Posterior vena cava (tissue), 2 donors: ENCODE measurements at regions of chr10 and their contacts with region 1.

Region 1: GRCh38 chr10:74262856-74263255 is 111.8 kb downstream of the ADK start:
- DNase-seq: no peak

Region 2: GRCh38 chr10:74826142-74827044 is 563.5 kb after region 1 on chr10 and contains the start of gene KAT6B:
- intact Hi-C with region 1: loop called in 1 of 2 experiments (anchors 10 kb)
- DNase-seq: peak; percentile 100
- total RNA-seq, gene KAT6B: 34.7 to 35.0 TPM

Region 3: DNA sequence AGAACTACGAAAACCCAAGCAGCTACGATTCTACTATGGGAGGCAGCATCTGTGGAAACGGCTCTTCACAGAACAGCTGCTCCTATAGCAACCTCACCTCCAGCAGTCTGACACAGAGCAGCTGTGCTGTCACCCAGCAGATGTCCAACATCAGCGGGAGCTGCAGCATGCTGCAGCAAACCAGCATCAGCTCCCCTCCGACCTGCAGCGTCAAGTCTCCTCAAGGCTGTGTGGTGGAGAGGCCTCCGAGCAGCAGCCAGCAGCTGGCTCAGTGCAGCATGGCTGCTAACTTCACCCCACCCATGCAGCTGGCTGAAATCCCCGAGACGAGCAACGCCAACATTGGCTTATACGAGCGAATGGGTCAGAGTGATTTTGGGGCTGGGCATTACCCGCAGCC is 767.0 kb after region 1 on chr10:
- intact Hi-C with region 1: loop called in 1 of 2 experiments (anchors 10 kb)
- DNase-seq: no peak

Region 4: DNA sequence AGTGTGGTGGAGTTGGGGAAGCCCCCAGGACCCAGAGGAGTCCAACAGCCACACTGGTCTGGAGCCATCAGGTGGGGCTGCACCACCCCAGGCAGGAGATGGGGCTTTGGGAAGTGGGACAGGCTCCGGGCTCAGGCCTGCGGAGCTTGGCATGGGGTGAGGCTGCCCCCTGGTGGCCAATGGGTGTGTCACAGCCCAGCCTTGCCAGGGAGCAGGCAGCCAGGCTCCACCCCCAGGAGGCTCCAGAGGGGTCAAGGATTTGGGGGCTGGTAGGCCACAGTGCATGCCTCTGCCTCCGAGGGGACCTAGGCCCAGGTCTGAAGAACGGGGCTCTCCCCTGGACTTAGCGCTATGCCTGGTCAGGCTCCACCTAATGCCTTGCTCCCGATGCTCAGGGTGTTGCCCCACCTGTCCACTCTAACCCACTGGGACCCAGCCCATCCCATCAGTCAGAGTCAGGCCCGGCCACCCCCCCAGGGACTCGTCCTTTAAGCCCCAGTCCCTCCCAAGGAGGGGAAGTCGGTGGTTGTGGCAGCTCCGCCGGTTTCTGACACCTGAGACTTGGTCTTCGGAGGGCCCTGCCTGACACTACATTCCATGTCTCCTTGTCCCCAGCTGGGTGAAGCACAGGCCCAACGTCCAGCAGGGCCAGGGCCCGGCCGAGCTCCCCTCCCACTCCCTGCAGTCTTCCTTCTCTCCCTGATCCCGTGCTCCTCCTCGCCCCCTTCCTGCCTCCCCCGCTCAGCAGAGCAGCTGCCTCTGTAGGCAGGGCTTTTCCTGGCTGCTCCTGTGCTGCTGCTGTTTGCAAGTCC is 837.3 kb after region 1 on chr10:
- intact Hi-C with region 1: loop called in 1 of 2 experiments (anchors 5 kb)
- DNase-seq: peak; percentile 93

Region 5: DNA sequence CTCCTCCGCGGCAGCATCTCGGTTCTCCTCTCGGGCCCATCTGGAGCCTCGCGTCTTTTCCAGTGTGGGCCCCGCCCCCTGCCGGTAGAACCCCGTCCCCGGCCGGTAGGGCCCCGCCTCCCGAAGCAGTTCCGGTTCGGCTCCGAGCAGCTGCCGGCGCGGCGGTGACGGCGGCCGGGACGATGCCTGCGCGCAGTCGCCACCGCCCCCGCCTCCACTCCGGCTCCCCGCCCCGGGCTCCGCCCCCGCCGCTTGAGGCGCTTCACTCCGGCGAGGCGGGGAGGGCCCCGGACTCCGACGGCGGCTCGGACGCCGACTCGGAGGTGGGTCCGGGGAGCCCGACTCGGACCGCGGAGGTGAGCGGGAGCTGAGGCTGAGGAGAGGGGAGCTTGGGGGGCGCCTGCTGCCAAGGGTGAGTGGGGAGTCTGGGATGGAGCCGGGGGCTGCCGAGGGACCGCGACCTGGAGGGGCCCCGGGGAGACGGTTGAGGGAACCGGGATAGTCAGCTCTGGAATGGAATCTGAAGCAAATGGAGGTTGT is 848.6 kb after region 1 on chr10 and contains the start of gene SAMD8:
- intact Hi-C with region 1: loop called in 1 of 2 experiments (anchors 5 kb)
- DNase-seq: peak; percentile 99
- total RNA-seq, gene SAMD8: 26.6 to 29.6 TPM